Gastrocnemius medialis (tissue), 4 donors: ENCODE measurements at regions of chr3 and their contacts with region 1.

Region 1: DNA sequence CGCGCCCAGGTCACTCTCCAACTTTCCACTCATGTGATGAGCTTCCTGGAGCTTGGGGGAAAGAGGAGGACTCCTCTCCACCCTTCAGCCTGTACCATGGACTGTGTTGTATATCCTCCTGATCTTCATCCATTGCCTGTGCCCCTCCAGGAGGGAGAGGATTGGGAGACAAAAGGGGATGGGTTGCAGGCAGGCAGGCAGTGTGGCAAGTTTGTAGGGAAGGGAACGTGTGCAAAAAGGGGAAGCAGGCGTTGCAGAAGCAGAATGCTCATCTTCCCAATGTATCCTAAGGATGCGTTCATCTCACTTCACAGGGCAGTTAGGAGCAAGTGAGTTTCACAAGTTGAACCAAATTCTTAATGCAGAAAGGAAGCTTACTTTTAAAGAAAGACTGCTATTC is 28.1 kb upstream of the GHSR start:
- DNase-seq: no peak
- ATAC-seq: no peak
- H3K4me3 ChIP-seq: peak overlapping the region in 3 of 4 donors; percentile 54 to 64 (median 55)
- H3K27ac ChIP-seq: peak overlapping the region in 2 of 4 donors; percentile 55 to 56
- H3K4me1 ChIP-seq: peaks cover 0 to 3% of the 10 kb centered on the region in 2 donors
- H3K27me3 ChIP-seq: no peaks in the 10 kb centered on the region
- CTCF ChIP-seq: no peak
- POLR2A ChIP-seq: no peak

Region 2: DNA sequence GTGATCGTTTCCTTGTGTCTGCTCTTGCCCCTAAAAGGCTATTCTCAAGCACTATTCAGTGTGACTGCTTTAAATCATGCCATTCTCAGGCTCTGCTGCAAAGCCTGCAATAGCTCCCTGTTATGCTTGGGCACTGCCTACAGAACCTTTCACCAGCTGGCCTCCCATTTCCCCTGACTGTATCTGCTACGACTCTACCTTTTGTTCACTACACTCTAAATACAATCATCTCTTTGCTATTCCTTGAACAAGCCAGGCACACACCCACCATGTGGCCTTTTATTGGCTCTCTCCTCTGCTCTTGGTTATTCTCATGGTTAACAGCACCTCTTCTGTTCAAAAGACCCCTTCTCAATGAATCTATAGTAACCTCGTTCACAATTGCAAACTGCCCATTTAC is 466.5 kb before region 1 on chr3:
- in situ Hi-C with region 1: loop called in 1 of 4 experiments (anchors 10 kb)
- intact Hi-C with region 1: no loop called
- DNase-seq: no peak
- ATAC-seq: no peak
- H3K4me3 ChIP-seq: no peak overlapping the region
- H3K27ac ChIP-seq: no peak overlapping the region
- H3K4me1 ChIP-seq: no peaks in the 10 kb centered on the region
- H3K27me3 ChIP-seq: no peaks in the 10 kb centered on the region
- CTCF ChIP-seq: no peak
- POLR2A ChIP-seq: no peak

Region 3: GRCh38 chr3:172228036-172228415 is 248.3 kb before region 1 on chr3:
- in situ Hi-C with region 1: no loop called
- intact Hi-C with region 1: no loop called
- DNase-seq: no peak
- ATAC-seq: no peak
- H3K4me3 ChIP-seq: no peak overlapping the region
- H3K27ac ChIP-seq: no peak overlapping the region
- H3K4me1 ChIP-seq: peaks cover 5 to 23% of the 10 kb centered on the region in 2 donors
- H3K27me3 ChIP-seq: no peaks in the 10 kb centered on the region
- CTCF ChIP-seq: no peak
- POLR2A ChIP-seq: no peak

Region 4: DNA sequence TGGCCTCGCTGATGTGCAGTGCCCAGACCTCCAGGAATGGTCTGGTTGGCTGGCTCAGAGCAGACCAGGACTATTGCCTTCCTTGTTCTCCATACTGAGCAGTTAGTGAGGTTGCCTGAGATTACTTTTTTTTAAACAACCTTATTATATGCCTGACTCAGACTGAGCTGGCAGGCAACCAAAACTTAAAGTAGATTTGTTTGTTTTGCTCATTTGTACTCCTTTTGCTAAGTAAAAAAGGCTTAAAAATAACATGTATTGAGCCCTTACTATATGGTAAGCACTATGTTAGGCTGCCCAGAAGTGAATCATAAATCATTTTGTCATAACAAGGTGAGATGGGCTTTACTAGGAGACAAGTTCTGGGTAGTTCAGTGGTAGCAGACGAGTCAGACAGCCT is 120.5 kb before region 1 on chr3:
- in situ Hi-C with region 1: loop called in 1 of 4 experiments (anchors 10 kb)
- intact Hi-C with region 1: no loop called
- DNase-seq: no peak
- ATAC-seq: peak; percentile 45 to 67
- H3K4me3 ChIP-seq: no peak overlapping the region
- H3K27ac ChIP-seq: peak overlapping the region; percentile 1 to 23 (median 10)
- H3K4me1 ChIP-seq: peaks cover 38 to 52% of the 10 kb centered on the region in 2 donors
- H3K27me3 ChIP-seq: no peaks in the 10 kb centered on the region
- CTCF ChIP-seq: no peak
- POLR2A ChIP-seq: no peak

Region 5: DNA sequence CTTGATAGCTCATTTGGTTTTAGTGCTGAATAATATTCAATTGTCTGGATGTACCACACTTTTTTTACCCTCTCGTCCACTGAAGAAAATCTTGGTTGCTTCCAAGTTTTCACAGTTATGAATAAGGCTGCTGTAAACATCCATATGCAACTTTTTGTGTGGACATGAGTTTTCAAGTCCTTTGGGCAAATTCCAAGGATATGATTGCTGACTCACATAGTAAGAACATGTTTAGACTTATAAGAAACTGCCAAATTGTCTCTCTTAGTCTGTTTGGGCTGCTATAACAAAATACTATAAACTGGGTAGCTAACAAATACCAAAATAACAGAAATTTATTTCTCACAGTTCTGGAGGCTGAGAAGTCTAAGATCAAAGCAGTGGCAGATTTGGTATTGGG is 106.4 kb after region 1 on chr3:
- in situ Hi-C with region 1: no loop called
- intact Hi-C with region 1: no loop called
- DNase-seq: no peak
- ATAC-seq: no peak
- H3K4me3 ChIP-seq: no peak overlapping the region
- H3K27ac ChIP-seq: peak overlapping the region in 1 of 4 donors; percentile 3
- H3K4me1 ChIP-seq: peaks cover 0 to 27% of the 10 kb centered on the region in 2 donors
- H3K27me3 ChIP-seq: no peaks in the 10 kb centered on the region
- CTCF ChIP-seq: no peak
- POLR2A ChIP-seq: no peak

Region 6: DNA sequence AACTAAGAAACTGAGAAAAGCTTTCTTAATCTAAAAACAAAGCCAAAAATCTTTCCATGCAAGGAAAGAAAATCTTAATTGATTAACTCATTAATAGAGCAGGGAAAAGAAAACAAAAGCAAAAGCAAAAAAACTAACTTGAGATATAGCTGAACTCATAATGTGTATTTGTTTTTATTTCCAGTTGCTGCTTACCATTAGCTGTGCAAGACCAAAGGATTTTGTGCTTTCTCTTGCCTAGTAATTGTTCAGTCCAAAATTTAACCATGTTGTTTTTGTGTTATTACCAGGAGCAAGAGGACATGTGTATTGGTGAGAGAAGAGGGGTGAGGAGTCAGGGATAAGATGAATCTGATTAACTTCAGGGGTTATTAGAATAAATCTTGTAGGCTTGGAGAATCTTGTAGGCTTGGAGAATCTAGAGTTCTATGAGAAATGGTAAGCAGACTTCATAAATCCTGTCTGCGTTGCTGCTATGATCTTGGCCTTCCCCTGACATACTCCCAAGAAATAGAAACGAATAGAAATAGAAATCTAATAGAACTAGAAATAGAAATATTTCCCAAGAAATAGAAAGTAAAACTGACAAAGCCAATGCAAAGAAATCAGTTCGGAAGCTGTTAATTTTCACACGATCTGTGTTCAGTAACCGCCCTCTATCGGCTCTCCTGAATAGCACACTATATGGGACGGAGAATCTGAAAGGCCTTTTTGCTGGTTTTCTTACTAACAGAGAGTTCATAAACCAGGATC is 119.5 kb after region 1 on chr3:
- in situ Hi-C with region 1: loop called in 3 of 4 experiments (anchors 10 kb)
- intact Hi-C with region 1: no loop called
- DNase-seq: no peak
- ATAC-seq: peak; percentile 54 to 81
- H3K4me3 ChIP-seq: peak overlapping the region; percentile 24 to 42 (median 36)
- H3K27ac ChIP-seq: peak overlapping the region; percentile 52 to 81 (median 68)
- H3K4me1 ChIP-seq: peaks cover 13 to 14% of the 10 kb centered on the region in 2 donors
- H3K27me3 ChIP-seq: no peaks in the 10 kb centered on the region
- CTCF ChIP-seq: peak; percentile 53 to 72 (median 58)
- POLR2A ChIP-seq: no peak